Activated CD4-positive, alpha-beta T cell treated with anti-CD3 and anti-CD28 coated beads, Interleukin-2, amount 10 ng/mL, durations not matched to agents 24 days and 14 days (primary cell): ENCODE measurements at regions of chr10 and their contacts with region 1.

Region 1: GRCh38 chr10:97445722-97446639 is at the starts of genes EXOSC1 and ZDHHC16:
- DNase-seq: peak; percentile 98
- H3K4me3 Mint-ChIP-seq: peak within 1 kb of the TSS; percentile 95
- H3K27ac Mint-ChIP-seq: peak within 1 kb of the TSS; percentile 70
- H3K4me1 Mint-ChIP-seq: peaks cover 47% of the 10 kb centered on the region
- H3K27me3 Mint-ChIP-seq: no peaks in the 10 kb centered on the region
- total RNA-seq, gene EXOSC1: 57.9 and 59.8 TPM in 2 replicates
- total RNA-seq, gene ZDHHC16: 42.9 and 43.1 TPM in 2 replicates

Region 2: DNA sequence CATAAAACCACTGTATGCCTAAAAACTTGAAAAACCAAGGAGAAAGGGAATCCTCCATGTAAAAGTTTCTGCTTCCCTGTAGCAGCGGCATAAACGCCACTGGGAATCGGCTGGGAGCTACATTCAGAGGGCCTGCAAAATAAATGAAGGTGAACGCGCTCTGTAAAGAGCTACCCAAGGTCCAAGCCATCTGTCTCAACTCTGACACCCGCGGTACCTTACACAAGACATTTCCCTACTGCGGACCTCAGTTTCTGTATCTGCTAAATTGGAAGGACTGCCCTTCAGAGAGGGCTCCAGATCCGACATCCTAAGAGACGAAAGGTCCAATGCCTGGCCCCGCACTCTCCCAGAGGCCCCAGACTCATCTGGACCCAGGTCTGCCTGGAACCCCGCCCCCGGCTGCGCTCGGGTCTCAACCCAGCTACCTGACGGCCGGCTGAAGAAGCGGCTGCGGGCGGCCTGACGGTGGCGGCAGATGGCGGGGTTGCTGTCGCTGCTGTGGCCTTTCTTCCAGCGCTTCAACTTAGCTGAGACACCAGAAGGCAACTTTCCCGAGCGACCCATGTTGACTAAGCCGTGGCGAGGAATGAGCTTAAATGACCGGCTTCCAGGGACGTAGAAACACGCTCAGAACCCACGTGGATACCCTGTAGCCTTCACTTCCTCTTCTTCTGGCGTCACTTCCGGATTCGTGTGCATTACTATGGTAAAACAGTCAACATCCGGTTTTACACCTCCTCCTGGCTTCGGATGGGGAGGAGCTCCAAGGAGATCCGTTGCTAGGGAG is 45.1 kb before region 1 on chr10 and contains the start of gene RRP12:
- intact Hi-C with region 1: loop called (anchors 1 kb)
- DNase-seq: peak; percentile 97
- H3K4me3 Mint-ChIP-seq: peak within 1 kb of the TSS; percentile 97
- H3K27ac Mint-ChIP-seq: peak within 1 kb of the TSS; percentile 94
- H3K4me1 Mint-ChIP-seq: peaks cover 16% of the 10 kb centered on the region
- H3K27me3 Mint-ChIP-seq: no peaks in the 10 kb centered on the region
- total RNA-seq, gene RRP12: 99.4 and 106 TPM in 2 replicates

Region 3: DNA sequence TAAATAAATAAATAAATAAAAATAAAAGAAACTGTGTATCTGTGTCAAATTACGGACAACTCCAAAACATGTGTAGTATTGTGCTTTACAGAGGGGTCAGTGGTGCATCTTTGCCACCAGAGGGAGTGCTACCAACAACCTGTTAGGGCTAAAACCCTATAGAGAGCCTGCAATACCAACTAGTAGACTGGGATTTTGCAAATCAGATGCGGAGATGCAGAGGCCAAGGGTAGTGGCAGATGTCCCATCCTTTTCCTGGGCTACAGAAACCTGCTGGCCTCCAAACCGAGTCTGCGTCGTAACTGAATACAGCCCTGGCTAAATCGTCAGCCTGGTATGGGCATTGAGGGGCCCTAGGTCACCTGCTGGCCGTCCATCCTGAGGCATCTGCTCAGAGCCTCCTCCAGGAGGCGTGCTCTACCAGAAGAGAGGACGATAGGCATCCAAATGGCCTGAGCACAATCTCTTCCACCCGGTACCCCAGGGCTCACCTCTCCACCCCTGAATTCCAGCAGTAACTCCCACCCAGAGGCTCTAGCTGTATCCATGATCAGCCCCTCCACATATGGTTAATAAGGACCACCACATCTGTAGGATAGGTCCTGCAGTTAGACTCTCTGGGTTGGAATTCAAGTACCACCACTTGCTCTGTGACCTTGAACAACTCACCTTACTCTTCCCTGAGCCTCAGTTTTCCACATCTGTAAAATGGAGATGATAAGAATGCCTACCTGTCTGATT is 38.6 kb before region 1 on chr10:
- intact Hi-C with region 1: loop called (anchors 1 kb)
- DNase-seq: peak; percentile 90
- H3K4me3 Mint-ChIP-seq: peak overlapping the region; percentile 73
- H3K27ac Mint-ChIP-seq: peak overlapping the region; percentile 63
- H3K4me1 Mint-ChIP-seq: peaks cover 13% of the 10 kb centered on the region
- H3K27me3 Mint-ChIP-seq: no peaks in the 10 kb centered on the region

Region 4: DNA sequence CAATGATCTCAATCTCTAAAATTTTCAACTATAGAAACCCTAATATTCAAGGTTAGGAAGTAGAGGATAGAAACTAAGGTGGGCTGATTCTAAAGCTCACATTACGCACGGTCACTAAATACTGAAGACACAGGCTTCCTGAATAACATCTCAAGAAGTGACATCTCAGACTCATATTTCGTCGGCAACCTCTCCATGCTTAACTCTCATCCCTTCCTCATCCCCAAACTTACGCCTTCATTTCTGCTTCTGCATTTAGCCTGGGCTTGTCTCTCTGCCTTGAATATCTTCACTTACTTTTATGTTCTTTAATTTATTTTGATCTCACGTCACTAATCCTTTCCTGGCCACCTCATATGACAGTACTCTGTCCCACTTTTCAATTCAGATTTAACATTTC is 10.8 kb before region 1 on chr10:
- intact Hi-C with region 1: loop called (anchors 1 kb)
- DNase-seq: no peak
- H3K4me3 Mint-ChIP-seq: no peak overlapping the region
- H3K27ac Mint-ChIP-seq: no peak overlapping the region
- H3K4me1 Mint-ChIP-seq: peaks cover 5% of the 10 kb centered on the region
- H3K27me3 Mint-ChIP-seq: no peaks in the 10 kb centered on the region

Region 5: GRCh38 chr10:97475936-97476594 is 30.1 kb after region 1 on chr10:
- intact Hi-C with region 1: no loop called
- DNase-seq: no peak
- H3K4me3 Mint-ChIP-seq: no peak overlapping the region
- H3K27ac Mint-ChIP-seq: peak overlapping the region; percentile 9
- H3K4me1 Mint-ChIP-seq: peaks cover 4% of the 10 kb centered on the region
- H3K27me3 Mint-ChIP-seq: no peaks in the 10 kb centered on the region